Activated CD4-positive, alpha-beta memory T cell treated with anti-CD3 and anti-CD28 coated beads for 36 hours (primary cell): ENCODE measurements at regions of chr11 and their contacts with region 1.

Region 1: DNA sequence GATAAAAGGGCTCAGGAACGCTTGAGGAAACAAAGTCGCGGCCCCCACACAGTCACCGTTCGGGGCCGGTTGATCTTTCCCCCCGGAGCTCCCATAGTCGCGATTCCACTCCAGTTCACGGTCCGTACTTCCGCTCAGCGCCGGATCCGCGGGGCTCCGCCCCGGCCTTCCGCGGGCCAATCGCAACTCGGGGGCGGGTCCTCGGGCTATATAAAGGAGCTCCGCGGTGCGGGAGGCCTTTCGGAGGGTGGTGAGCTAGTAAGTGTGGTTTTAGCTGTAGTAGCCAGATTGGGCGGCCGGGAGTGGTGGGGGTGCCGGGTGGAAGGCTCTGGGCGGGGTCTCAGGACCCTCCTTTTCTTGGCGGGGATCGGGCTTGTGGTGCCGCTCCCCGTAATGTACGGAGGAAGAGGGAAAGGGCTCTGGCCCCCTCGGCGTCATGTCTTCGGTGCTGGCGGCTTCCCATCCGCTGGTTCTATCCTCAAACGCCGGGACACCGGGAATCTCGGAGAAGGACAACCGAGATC is at the starts of genes C11orf98 and CSKMT:
- DNase-seq: peak; percentile 97
- H3K4me3 Mint-ChIP-seq: peak within 1 kb of the TSS; percentile 98
- H3K27ac Mint-ChIP-seq: peak within 1 kb of the TSS; percentile 97
- H3K4me1 Mint-ChIP-seq: peaks cover 40% of the 10 kb centered on the region
- H3K27me3 Mint-ChIP-seq: no peaks in the 10 kb centered on the region
- total RNA-seq, gene C11orf98: 107 to 110 TPM
- total RNA-seq, gene CSKMT: 27.7 to 33.9 TPM

Region 2: GRCh38 chr11:62427630-62428233 is 237.4 kb before region 1 on chr11:
- CTCF ChIA-PET with region 1: interaction called, 10 read pairs
- POLR2A ChIA-PET with region 1: interaction called, 3 read pairs
- intact Hi-C with region 1: loop called (anchors 10 kb)
- DNase-seq: peak; percentile 39
- H3K4me3 Mint-ChIP-seq: peak overlapping the region; percentile 27
- H3K27ac Mint-ChIP-seq: peak overlapping the region; percentile 79
- H3K4me1 Mint-ChIP-seq: peaks cover 32% of the 10 kb centered on the region
- H3K27me3 Mint-ChIP-seq: no peaks in the 10 kb centered on the region

Region 3: DNA sequence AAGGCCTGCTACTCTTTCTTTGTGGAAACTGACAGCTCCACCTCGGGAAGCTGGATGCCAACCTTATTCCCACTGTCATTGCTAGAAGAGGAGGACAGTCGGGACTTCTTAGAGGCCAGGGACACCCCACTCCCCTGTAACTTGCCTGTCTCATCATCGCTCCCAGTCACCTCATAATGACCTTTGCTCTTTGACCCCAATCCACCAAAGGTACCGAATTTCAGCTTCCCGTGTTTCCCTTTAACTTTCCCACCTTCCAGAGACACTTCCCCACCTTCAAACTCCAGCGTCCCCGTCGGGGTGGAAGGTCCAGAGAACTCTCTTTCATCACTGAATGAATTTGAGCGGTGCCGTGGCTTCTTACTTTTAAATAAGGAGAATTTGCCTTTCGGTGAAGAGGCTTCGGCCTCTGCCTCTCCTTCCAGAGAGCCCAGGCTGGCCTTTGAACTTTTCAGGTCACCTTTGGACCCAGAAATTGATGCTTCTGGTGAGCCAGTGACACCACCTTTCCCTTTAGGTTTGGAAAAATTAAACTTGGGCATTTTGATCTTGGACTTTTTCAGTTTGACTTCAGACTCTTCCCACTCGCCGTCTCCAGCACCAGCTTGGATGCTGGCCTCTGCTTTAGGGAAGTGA is 148.3 kb before region 1 on chr11:
- CTCF ChIA-PET with region 1: no interaction called
- POLR2A ChIA-PET with region 1: no interaction called
- intact Hi-C with region 1: no loop called
- DNase-seq: no peak
- H3K4me3 Mint-ChIP-seq: no peak overlapping the region
- H3K27ac Mint-ChIP-seq: no peak overlapping the region
- H3K4me1 Mint-ChIP-seq: peaks cover 9% of the 10 kb centered on the region
- H3K27me3 Mint-ChIP-seq: no peaks in the 10 kb centered on the region

Region 4: DNA sequence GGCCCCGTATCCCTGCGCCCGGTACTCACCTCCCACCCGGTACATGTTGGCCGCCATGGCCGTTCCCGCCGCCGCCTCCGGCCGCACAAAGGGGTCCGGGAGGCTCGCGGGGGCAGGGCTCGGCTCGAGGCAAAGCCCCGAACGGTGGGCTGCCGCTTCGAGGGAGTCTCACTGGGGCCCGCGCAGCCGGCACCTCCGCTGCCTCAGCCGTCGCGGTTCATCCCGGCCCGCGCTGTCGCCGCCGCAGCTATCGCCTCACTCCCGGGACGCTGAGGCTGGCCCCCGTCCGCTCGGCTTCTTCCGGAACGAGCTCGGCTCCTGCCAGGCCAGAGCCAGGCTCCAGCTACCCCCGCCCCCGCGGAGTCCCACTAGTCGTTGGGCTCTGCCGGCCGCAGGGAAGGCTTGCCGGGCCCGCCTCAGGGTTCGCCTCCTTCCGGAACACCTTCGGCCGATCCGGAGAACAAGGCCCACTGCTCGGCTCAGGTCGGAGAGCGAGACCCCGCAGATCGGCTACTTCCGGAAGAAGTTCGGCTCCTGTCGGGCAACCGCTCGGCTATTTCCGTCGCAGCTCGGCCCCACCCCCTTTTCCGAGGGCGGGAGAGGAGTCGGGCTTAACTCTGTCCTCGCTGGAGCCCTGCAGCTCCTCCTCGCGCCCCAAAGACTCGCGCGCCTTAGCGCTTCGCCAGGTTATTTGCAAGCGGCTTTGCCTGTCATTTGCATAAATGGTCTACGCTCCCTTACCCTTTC is 63.6 kb before region 1 on chr11 and contains the start of gene MTA2:
- CTCF ChIA-PET with region 1: interaction called, 3 read pairs
- POLR2A ChIA-PET with region 1: interaction called, 44 read pairs
- intact Hi-C with region 1: loop called (anchors 2 kb)
- DNase-seq: peak; percentile 100
- H3K4me3 Mint-ChIP-seq: peak within 1 kb of the TSS; percentile 81
- H3K27ac Mint-ChIP-seq: peak within 1 kb of the TSS; percentile 97
- H3K4me1 Mint-ChIP-seq: peaks cover 56% of the 10 kb centered on the region
- H3K27me3 Mint-ChIP-seq: no peaks in the 10 kb centered on the region
- total RNA-seq, gene MTA2: 166 to 167 TPM

Region 5: DNA sequence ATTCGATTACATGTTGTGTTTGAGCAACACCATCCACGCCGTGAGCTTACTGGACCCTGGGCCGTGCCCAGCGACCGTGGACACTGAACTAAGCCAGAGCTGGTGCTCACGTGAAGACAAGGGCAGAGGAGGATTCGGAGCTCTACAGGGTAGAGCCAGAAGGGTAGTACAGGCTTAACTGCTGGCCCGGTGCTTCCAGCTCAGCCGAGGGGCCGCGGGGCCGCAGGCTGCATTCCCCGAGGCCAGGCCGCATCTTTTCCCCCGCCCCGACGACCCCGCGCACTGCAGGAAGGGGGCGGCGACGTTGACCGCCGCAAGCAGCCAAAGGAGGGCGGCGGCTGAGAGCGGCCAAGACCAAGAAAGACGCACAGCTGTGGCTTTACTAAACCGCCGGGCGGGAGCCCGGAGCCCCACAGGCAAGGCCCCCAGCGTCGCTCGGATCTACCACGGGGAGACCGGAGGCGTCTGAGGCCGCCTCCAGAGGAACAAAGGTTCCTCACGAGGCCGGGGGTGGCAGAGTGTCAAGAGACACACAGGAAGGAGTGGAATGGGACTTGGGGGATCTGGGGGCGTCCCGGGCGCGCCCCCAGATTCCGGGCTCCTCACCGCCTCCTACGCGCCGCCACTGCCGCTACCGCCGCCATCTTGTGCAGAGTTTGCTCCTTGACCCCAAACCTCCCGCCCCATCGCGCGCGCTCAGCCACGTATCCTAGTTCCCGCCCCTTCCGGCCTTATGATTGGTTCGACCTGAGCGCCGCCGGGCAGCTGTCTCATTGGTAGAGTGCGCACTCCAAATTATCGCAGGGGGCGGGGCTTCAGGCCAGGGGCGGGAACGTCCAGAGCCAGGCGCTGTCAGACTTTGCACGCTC is 18.9 kb before region 1 on chr11 and contains the start of gene GANAB:
- CTCF ChIA-PET with region 1: interaction called, 4 read pairs
- POLR2A ChIA-PET with region 1: interaction called, 68 read pairs
- intact Hi-C with region 1: no loop called
- DNase-seq: peak; percentile 100
- H3K4me3 Mint-ChIP-seq: peak within 1 kb of the TSS; percentile 94
- H3K27ac Mint-ChIP-seq: peak within 1 kb of the TSS; percentile 94
- H3K4me1 Mint-ChIP-seq: peaks cover 30% of the 10 kb centered on the region
- H3K27me3 Mint-ChIP-seq: no peaks in the 10 kb centered on the region
- total RNA-seq, gene GANAB: 247 to 249 TPM

Region 6: GRCh38 chr11:62705880-62706849 is 41.0 kb after region 1 on chr11:
- CTCF ChIA-PET with region 1: no interaction called
- POLR2A ChIA-PET with region 1: interaction called, 18 read pairs
- intact Hi-C with region 1: loop called (anchors 2 kb)
- DNase-seq: peak; percentile 96
- H3K4me3 Mint-ChIP-seq: peak overlapping the region; percentile 85
- H3K27ac Mint-ChIP-seq: peak overlapping the region; percentile 70
- H3K4me1 Mint-ChIP-seq: peaks cover 50% of the 10 kb centered on the region
- H3K27me3 Mint-ChIP-seq: no peaks in the 10 kb centered on the region

Region 7: GRCh38 chr11:62841361-62842184 is 176.4 kb after region 1 on chr11:
- CTCF ChIA-PET with region 1: no interaction called
- POLR2A ChIA-PET with region 1: interaction called, 24 read pairs
- intact Hi-C with region 1: no loop called
- DNase-seq: peak; percentile 88
- H3K4me3 Mint-ChIP-seq: no peak overlapping the region
- H3K27ac Mint-ChIP-seq: no peak overlapping the region
- H3K4me1 Mint-ChIP-seq: peaks cover 17% of the 10 kb centered on the region
- H3K27me3 Mint-ChIP-seq: no peaks in the 10 kb centered on the region